GM23248 (cell line): ENCODE measurements at regions of chr2 and their contacts with region 1.

Region 1: GRCh38 chr2:187594801-187595200 is 40.6 kb upstream of the TFPI start:
- DNase-seq: peak; percentile 19
- H3K4me3 ChIP-seq: no peak overlapping the region
- H3K27ac ChIP-seq: no peak overlapping the region
- H3K4me1 ChIP-seq: 0 out of 2 replicates have a peak, but pooled peaks cover 3% of the 10 kb centered on the region
- H3K27me3 ChIP-seq: no peaks in the 10 kb centered on the region

Region 2: DNA sequence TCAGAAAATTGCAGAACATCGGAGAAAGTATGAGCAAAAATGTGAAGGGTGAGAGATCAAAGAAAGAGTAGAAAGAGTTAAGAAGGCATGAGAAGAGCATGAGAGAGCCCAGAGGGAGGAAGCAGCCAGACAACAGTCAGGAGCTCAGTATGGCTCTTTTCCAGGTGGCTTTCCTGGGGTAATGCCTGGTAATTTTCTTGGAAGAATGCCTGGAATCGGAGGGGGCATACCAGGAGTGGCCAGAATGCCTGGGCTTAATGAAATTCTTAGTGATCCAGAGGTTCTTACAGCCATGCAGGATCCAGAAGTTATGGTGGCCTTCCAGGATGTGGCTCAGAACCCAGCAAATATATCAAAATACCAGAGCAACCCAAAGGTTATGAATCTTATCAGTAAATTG is 231.2 kb after region 1 on chr2:
- in situ Hi-C with region 1: loop called (anchors 10 kb)
- DNase-seq: peak; percentile 16
- H3K4me3 ChIP-seq: no peak overlapping the region
- H3K27ac ChIP-seq: no peak overlapping the region
- H3K4me1 ChIP-seq: no peaks in the 10 kb centered on the region
- H3K27me3 ChIP-seq: no peaks in the 10 kb centered on the region